Dorsolateral prefrontal cortex (tissue), 120 donors: ENCODE measurements at regions of chr5 and their contacts with region 1.

Region 1: GRCh38 chr5:73120222-73121118 is at the start of gene TMEM171:
- DNase-seq: peak in 5 of 10 donors; percentile 30 to 60 (median 31)
- H3K4me3 ChIP-seq: peak within 1 kb of the TSS; percentile 41 to 81 (median 67)
- H3K27ac ChIP-seq: peak within 1 kb of the TSS in 53 of 59 donors; percentile 10 to 97 (median 84)
- H3K27me3 ChIP-seq: peaks cover 0 to 6% (median 0%) of the 10 kb centered on the region in 45 donors
- CTCF ChIP-seq: peak in 1 of 56 donors; percentile 9
- total RNA-seq, gene TMEM171: 0.39 to 6.5 (median 1.4) TPM in 111 of 120 experiments, not detected in the others

Region 2: GRCh38 chr5:72523960-72524582 is 596.4 kb before region 1 on chr5:
- intact Hi-C with region 1: no loop called
- DNase-seq: no peak
- H3K4me3 ChIP-seq: no peak overlapping the region
- H3K27ac ChIP-seq: no peak overlapping the region
- H3K27me3 ChIP-seq: no peaks in the 10 kb centered on the region
- CTCF ChIP-seq: peak in 55 of 56 donors; percentile 38 to 79 (median 61)

Region 3: DNA sequence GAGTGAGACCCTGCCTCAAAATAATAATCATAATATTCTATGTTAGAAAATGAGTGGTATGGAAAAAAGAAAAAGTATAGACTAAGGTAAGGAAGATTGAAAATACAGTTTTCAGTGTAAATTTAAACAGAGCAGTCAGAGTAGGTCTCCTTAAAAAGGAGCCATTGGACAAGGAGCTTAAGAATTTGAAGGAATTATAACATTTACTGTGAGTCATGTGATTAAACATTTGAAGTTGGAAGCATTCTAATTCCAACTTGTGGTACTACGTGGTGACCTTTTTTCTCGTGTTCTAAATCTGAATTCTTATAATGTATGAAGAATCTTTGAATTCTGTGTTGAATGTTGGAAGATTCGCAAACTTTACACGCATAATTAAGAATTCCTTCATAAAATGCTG is 39.4 kb before region 1 on chr5:
- intact Hi-C with region 1: loop called in 1 of 2 experiments (anchors 5 kb)
- DNase-seq: no peak
- H3K4me3 ChIP-seq: no peak overlapping the region
- H3K27ac ChIP-seq: no peak overlapping the region
- H3K27me3 ChIP-seq: no peaks in the 10 kb centered on the region
- CTCF ChIP-seq: no peak

Region 4: GRCh38 chr5:73201547-73202513 is 81.4 kb after region 1 on chr5:
- intact Hi-C with region 1: loop called in 1 of 2 experiments (anchors 10 kb)
- DNase-seq: peak in 9 of 10 donors; percentile 9 to 74 (median 55)
- H3K4me3 ChIP-seq: peak overlapping the region in 10 of 59 donors; percentile 0 to 47 (median 21)
- H3K27ac ChIP-seq: no peak overlapping the region
- H3K27me3 ChIP-seq: peaks cover 0 to 35% (median 11%) of the 10 kb centered on the region in 45 donors
- CTCF ChIP-seq: peak; percentile 30 to 89 (median 76)

Region 5: GRCh38 chr5:73519531-73520283 is 399.2 kb after region 1 on chr5:
- intact Hi-C with region 1: no loop called
- DNase-seq: peak in 7 of 10 donors; percentile 38 to 72 (median 58)
- H3K4me3 ChIP-seq: peak overlapping the region in 1 of 59 donors; percentile 14
- H3K27ac ChIP-seq: no peak overlapping the region
- H3K27me3 ChIP-seq: no peaks in the 10 kb centered on the region
- CTCF ChIP-seq: peak; percentile 42 to 83 (median 68)